ENCODE measurements at regions of chr10 and their contacts with region 1.

Region 1: DNA sequence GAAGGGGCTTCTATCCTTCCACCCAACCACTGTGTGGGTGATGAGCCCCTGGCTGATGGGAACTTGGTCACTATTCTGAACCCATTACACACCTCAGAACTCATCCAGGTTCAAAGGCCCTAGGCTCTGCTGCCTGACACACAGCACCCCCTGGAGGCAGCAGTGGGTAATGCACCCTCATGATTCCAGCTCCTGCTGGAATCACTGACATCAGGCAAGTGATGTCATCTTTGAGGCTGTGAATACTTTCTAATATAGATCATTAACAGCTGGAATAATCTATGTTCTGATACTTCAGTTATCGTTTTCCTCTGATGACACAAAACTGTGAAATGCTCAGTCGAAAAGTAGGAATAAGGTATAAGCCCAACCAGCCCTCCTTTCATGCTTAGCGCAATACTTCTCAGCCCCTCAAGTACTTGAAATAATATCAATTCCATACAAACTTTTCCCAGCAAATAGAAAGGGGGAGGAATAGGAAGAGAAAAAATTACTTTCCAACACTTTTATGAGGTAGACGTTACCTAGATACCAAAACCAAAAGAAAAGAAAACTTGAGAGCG is 7.5 kb upstream of the RBP3 start:
- DNase-seq: peak; percentile 83 to 91 (median 88)
- ATAC-seq: peak; percentile 76
- H3K4me3 ChIP-seq: no peak overlapping the region
- H3K27ac ChIP-seq: no peak overlapping the region
- H3K4me1 ChIP-seq: peaks cover 8 to 23% of the 10 kb centered on the region in 2 experiments
- H3K27me3 ChIP-seq: peaks cover 8 to 9% of the 10 kb centered on the region in 2 experiments; a peak in 4 of 5 replicates
- CTCF ChIP-seq: peak; percentile 93 to 99 (median 96)
- EP300 ChIP-seq: no peak
- POLR2A ChIP-seq: no peak
- RAD21 ChIP-seq: peak; percentile 91 to 97

Region 2: GRCh38 chr10:47024399-47025252 is 316.1 kb before region 1 on chr10:
- CTCF ChIA-PET with region 1: interaction called, 14 read pairs
- POLR2A ChIA-PET with region 1: no interaction called
- in situ Hi-C with region 1: no loop called
- intact Hi-C with region 1: loop called (anchors 2 kb)
- DNase-seq: peak; percentile 70 to 88 (median 84)
- ATAC-seq: peak; percentile 93
- H3K4me3 ChIP-seq: no peak overlapping the region
- H3K27ac ChIP-seq: no peak overlapping the region
- H3K4me1 ChIP-seq: peaks cover 3 to 6% of the 10 kb centered on the region in 2 experiments; a peak in 1 of 5 replicates
- H3K27me3 ChIP-seq: peaks cover 0 to 39% of the 10 kb centered on the region in 2 experiments; a peak in 2 of 5 replicates
- CTCF ChIP-seq: peak; percentile 84 to 91 (median 88)
- EP300 ChIP-seq: no peak
- POLR2A ChIP-seq: no peak
- RAD21 ChIP-seq: peak; percentile 57 to 80

Region 3: GRCh38 chr10:47047671-47048525 is 292.8 kb before region 1 on chr10:
- CTCF ChIA-PET with region 1: interaction called, 31 read pairs
- POLR2A ChIA-PET with region 1: no interaction called
- in situ Hi-C with region 1: no loop called
- intact Hi-C with region 1: loop called (anchors 1 kb)
- DNase-seq: peak; percentile 80 to 89 (median 86)
- ATAC-seq: peak; percentile 96
- H3K4me3 ChIP-seq: no peak overlapping the region
- H3K27ac ChIP-seq: no peak overlapping the region
- H3K4me1 ChIP-seq: peaks cover 0 to 4% of the 10 kb centered on the region in 2 experiments; a peak in 1 of 5 replicates
- H3K27me3 ChIP-seq: peaks cover 6 to 40% of the 10 kb centered on the region in 2 experiments; a peak in 3 of 5 replicates
- CTCF ChIP-seq: peak; percentile 88 to 95 (median 94)
- EP300 ChIP-seq: no peak
- POLR2A ChIP-seq: no peak
- RAD21 ChIP-seq: peak; percentile 78 to 91

Region 4: GRCh38 chr10:47104786-47105385 is 235.8 kb before region 1 on chr10:
- CTCF ChIA-PET with region 1: no interaction called
- POLR2A ChIA-PET with region 1: no interaction called
- in situ Hi-C with region 1: no loop called
- intact Hi-C with region 1: no loop called
- DNase-seq: no peak
- ATAC-seq: no peak
- H3K4me3 ChIP-seq: no peak overlapping the region
- H3K27ac ChIP-seq: no peak overlapping the region
- H3K4me1 ChIP-seq: no peaks in the 10 kb centered on the region
- H3K27me3 ChIP-seq: peaks cover 3 to 15% of the 10 kb centered on the region in 2 experiments; a peak in 4 of 5 replicates
- CTCF ChIP-seq: no peak
- EP300 ChIP-seq: no peak
- POLR2A ChIP-seq: no peak
- RAD21 ChIP-seq: no peak

Region 5: DNA sequence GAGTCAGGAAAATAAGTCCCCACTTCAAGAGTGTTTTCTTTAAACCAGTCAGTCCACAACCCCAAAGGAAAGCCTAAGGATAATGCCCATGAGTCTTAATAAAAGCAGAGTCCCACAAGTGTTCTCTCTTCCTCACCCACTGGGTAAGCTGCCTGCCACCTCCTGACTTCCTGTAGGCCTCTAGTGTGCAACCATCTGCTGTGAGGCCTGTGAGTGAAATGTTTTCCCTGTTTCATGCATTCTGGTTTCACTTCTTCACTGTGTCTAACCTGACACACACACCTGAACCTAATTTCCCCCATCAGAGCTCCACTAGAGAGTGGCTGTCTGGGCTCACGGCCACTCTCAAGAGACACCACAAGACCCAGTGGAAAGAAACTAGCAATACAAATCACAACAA is 79.6 kb before region 1 on chr10:
- CTCF ChIA-PET with region 1: interaction called, 9 read pairs
- POLR2A ChIA-PET with region 1: no interaction called
- in situ Hi-C with region 1: no loop called
- intact Hi-C with region 1: loop called (anchors 5 kb)
- DNase-seq: no peak
- ATAC-seq: no peak
- H3K4me3 ChIP-seq: no peak overlapping the region
- H3K27ac ChIP-seq: no peak overlapping the region
- H3K4me1 ChIP-seq: peaks cover 0 to 4% of the 10 kb centered on the region in 2 experiments; a peak in 1 of 5 replicates
- H3K27me3 ChIP-seq: peaks cover 6 to 25% of the 10 kb centered on the region in 2 experiments; a peak in 4 of 5 replicates
- CTCF ChIP-seq: no peak
- EP300 ChIP-seq: no peak
- POLR2A ChIP-seq: no peak
- RAD21 ChIP-seq: no peak